ENCODE measurements at regions of chr1 and their contacts with region 1.

Region 1: GRCh38 chr1:109984456-109985275 is at the start of gene AHCYL1:
- DNase-seq: peak; percentile 100
- H3K4me3 Mint-ChIP-seq: peak within 1 kb of the TSS; percentile 99
- H3K27ac Mint-ChIP-seq: peak within 1 kb of the TSS; percentile 92
- H3K4me1 Mint-ChIP-seq: peaks cover 39% of the 10 kb centered on the region
- H3K27me3 Mint-ChIP-seq: no peaks in the 10 kb centered on the region
- total RNA-seq, gene AHCYL1: 89.6 to 92.3 TPM

Region 2: DNA sequence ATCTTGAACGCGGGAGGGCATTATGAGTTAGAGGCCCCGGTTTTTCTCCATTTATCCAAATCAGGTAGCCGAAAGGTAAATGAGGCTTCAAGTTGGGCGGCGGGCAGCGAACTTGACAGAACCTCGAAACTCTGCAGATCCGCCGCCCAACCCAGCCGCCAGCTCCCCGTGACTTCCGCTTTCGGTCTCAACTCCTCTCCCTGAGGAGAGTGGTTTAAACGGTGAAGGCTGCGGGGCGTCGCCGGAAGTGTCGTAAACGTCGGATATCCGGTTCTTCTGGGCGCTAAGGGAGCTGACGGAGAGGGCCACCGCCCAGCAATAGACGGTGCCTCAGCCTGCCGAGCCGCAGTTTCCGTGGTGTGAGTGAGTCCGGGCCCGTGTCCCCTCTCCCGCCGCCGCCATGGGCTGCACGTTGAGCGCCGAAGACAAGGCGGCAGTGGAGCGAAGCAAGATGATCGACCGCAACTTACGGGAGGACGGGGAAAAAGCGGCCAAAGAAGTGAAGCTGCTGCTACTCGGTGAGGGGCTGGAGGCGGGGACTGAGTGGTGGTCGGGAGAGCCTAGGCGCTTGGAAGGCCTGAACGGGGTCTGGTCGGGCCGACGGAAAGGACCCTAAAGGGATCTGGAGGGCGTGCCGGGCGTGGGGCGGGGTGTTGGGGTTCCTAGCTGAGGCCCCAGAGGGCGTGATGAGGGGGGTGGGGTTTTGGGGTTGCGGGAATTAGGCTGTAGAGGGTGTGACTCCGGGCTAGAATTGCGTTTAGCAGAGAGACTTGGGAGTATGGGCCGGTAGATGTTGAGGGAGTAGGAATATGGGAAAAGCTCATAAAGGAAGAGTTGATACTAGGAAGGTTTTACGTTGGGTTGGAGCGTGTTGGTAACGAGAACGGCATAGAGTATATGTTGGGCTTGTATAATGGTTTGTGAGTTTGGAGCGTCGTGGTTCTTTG is 436.1 kb before region 1 on chr1 and contains the start of gene GNAI3:
- CTCF ChIA-PET with region 1: interaction called, 44 read pairs
- POLR2A ChIA-PET with region 1: interaction called, 13 read pairs
- intact Hi-C with region 1: loop called (anchors 1 kb)
- DNase-seq: peak; percentile 98
- H3K4me3 Mint-ChIP-seq: peak within 1 kb of the TSS; percentile 86
- H3K27ac Mint-ChIP-seq: peak within 1 kb of the TSS; percentile 94
- H3K4me1 Mint-ChIP-seq: peaks cover 41% of the 10 kb centered on the region
- H3K27me3 Mint-ChIP-seq: no peaks in the 10 kb centered on the region
- total RNA-seq, gene GNAI3: 9.2 to 9.9 TPM

Region 3: DNA sequence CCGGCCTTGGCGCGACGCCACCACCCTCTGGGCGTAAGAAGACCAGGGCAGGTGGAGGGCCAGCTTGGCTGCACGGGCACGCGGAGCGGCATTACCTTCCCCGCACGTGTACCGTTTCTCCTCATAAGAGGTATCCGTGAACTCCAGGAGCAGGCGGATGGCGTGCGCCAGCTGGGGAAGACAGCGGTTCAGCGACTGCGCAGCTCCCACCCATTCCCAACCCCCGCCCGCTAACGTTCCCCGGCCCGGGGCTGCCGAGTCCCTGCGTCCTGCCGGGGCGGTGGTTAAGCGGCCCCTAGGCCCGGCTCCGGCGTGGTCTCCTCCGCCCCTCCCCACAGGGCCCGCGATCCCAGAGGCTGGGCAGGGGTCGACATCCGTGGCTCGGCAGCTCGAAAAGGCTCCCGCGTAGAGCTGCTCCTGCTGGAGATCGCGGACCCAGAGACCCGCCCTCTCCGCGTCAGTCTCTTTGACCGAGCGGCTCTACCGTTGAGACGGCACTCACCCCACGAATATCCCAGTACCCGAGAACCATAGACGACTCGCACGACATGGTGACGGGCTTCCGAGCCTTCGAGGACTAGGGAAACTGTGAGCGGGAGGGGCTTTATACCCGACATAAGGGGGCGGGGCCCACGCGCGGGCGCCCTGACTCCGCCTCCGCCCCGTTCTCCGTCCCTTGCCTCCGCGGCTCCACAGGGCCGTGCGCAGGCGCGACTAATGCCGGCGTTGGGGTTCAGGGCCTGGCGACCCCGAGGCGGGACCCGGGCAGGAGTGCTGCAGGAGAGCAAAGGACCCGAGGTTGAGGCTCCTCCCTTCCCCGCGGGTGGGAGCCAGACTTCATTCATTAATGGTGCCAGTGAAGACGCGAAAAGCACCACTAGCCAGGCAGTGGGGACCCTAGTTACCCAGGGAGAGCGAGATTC is 244.7 kb before region 1 on chr1:
- CTCF ChIA-PET with region 1: interaction called, 4 read pairs
- POLR2A ChIA-PET with region 1: no interaction called
- intact Hi-C with region 1: loop called (anchors 1 kb)
- DNase-seq: peak; percentile 80
- H3K4me3 Mint-ChIP-seq: peak overlapping the region; percentile 65
- H3K27ac Mint-ChIP-seq: no peak overlapping the region
- H3K4me1 Mint-ChIP-seq: peaks cover 6% of the 10 kb centered on the region
- H3K27me3 Mint-ChIP-seq: peaks cover 16% of the 10 kb centered on the region

Region 4: GRCh38 chr1:109796484-109797302 is 188.0 kb before region 1 on chr1:
- CTCF ChIA-PET with region 1: interaction called, 60 read pairs
- POLR2A ChIA-PET with region 1: interaction called, 17 read pairs
- intact Hi-C with region 1: loop called (anchors 2 kb)
- DNase-seq: peak; percentile 25
- H3K4me3 Mint-ChIP-seq: peak overlapping the region; percentile 9
- H3K27ac Mint-ChIP-seq: peak overlapping the region; percentile 79
- H3K4me1 Mint-ChIP-seq: peaks cover 71% of the 10 kb centered on the region
- H3K27me3 Mint-ChIP-seq: no peaks in the 10 kb centered on the region

Region 5: DNA sequence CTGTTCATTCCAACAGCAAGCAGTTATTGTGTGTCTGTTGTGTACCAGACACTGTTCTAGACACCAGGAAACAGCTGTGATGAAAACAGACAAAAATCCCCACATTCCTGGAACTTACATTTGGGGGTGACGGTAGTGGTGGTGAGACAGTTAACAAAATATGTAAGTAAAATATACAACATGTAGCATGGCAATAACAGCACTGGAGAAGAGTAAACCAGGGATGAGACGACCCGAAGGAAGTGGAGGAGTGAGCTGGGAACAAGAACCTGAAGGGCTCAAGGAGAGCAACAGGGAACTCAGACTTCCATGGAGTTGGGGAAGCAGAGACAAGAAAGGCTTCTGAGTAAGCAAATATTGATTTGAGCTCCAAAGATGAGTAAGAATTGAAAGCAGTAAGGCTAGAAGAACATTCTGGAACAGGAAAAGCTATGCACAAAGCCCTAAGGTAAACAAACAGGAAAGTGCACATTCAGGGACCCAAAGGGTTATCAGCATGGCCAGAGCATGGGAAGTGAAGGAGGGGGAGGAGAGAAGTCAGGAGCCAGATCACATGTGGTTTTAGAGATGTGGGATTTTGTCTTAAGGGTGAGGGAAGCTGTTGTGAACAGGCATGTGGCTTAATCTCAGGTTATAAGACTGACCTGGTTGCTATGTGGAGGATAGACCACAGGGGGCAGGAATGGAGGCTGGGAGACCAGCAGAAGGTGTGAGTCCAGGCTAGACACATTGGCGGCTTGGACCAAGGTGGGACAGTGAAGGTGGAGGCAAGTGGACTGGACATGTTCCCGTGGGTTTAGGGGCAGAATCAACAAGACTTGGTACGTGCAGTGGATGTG is 66.7 kb before region 1 on chr1:
- CTCF ChIA-PET with region 1: interaction called, 21 read pairs
- POLR2A ChIA-PET with region 1: interaction called, 3 read pairs
- intact Hi-C with region 1: no loop called
- DNase-seq: no peak
- H3K4me3 Mint-ChIP-seq: no peak overlapping the region
- H3K27ac Mint-ChIP-seq: no peak overlapping the region
- H3K4me1 Mint-ChIP-seq: peaks cover 15% of the 10 kb centered on the region
- H3K27me3 Mint-ChIP-seq: no peaks in the 10 kb centered on the region

Region 6: GRCh38 chr1:110011527-110012041 is 26.9 kb after region 1 on chr1:
- CTCF ChIA-PET with region 1: interaction called, 23 read pairs
- POLR2A ChIA-PET with region 1: interaction called, 4 read pairs
- intact Hi-C with region 1: no loop called
- DNase-seq: peak; percentile 39
- H3K4me3 Mint-ChIP-seq: no peak overlapping the region
- H3K27ac Mint-ChIP-seq: no peak overlapping the region
- H3K4me1 Mint-ChIP-seq: no peaks in the 10 kb centered on the region
- H3K27me3 Mint-ChIP-seq: no peaks in the 10 kb centered on the region

Region 7: GRCh38 chr1:110118636-110119615 is 134.3 kb after region 1 on chr1:
- CTCF ChIA-PET with region 1: no interaction called
- POLR2A ChIA-PET with region 1: no interaction called
- intact Hi-C with region 1: no loop called
- DNase-seq: peak; percentile 39
- H3K4me3 Mint-ChIP-seq: no peak overlapping the region
- H3K27ac Mint-ChIP-seq: no peak overlapping the region
- H3K4me1 Mint-ChIP-seq: peaks cover 4% of the 10 kb centered on the region
- H3K27me3 Mint-ChIP-seq: peaks cover 19% of the 10 kb centered on the region

Region 8: DNA sequence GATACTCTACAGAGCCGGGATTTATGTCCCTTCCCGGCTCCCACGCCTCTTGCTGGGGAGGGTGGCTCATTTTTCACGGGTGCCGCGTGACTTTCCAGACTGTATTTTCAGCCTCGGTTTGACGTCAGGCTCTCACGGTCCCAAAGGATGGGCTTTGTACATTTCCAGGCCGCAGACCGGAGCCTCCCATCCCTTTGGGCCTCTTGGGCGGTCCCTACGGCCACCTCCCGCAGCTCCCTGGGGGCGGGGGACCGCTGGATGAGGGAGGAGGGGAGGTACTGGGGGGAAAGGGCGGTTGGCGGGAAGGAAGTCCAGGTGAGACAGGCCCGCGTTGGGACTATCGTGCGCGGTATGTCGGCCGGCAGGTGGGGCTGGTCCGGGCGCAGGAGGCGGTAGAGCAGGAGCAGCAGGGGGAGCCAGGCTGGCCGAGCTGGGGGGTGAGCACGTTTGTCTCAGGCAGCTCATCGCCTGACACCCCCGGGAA is 145.5 kb after region 1 on chr1:
- CTCF ChIA-PET with region 1: no interaction called
- POLR2A ChIA-PET with region 1: no interaction called
- intact Hi-C with region 1: no loop called
- DNase-seq: peak; percentile 16
- H3K4me3 Mint-ChIP-seq: no peak overlapping the region
- H3K27ac Mint-ChIP-seq: no peak overlapping the region
- H3K4me1 Mint-ChIP-seq: no peaks in the 10 kb centered on the region
- H3K27me3 Mint-ChIP-seq: peaks cover 27% of the 10 kb centered on the region

Measured in activated CD4-positive, alpha-beta memory T cell treated with anti-CD3 and anti-CD28 coated beads for 36 hours (primary cell).